HepG2 (cell line): ENCODE measurements at regions of chr17 and their contacts with region 1.

Region 1: DNA sequence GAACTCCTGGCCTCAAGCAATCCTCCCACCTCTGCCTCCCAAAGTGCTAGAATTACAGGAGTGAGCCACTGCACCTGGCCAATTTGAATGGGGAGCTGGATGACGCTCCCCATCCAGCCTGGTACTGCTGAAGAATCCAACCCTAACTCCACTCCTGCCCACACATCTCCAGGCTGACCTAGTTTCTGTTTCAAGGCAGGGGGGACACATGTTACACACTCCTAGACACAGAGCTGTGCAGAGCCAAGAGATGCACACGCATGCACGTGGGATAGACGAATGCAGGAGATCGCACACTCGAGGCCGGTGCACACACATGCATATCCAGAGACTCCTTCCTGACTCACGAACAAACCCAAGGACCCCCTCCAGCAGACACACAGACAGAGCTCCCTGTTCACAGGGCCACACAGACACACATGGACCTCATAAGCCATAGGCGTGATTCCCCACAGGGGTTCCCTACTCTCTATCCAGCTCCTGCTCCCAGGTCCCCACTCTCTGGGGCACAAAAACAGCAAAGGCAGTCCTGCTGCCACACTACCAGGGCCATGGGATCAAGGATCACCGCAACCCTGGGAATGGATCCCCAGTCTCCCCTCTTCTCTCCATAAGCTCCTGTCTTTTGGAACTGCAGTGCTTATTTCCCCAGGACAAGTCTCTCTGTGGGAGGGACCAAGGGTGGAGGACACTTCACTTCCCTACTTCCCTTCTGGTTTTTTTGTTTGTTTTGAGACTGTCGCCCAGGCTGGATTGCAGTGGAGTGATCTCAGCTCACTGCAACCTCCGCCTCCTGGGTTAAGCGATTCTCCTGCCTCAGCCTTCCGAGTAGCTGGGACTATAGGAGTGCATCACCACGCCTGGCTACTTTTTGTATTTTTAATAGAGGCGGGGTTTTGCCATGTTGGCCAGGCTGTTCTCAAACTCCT is 14.4 kb downstream of the EPOP start:
- DNase-seq: no peak
- ATAC-seq: no peak
- H3K4me3 ChIP-seq: no peak overlapping the region
- H3K27ac ChIP-seq: peak overlapping the region; percentile 75
- H3K4me1 ChIP-seq: peaks cover 85% of the 10 kb centered on the region
- H3K27me3 ChIP-seq: no peaks in the 10 kb centered on the region
- CTCF ChIP-seq: no peak
- EP300 ChIP-seq: no peak
- POLR2A ChIP-seq: no peak
- RAD21 ChIP-seq: 0 out of 2 replicates have a peak, but pooled peaks have one; percentile 19

Region 2: GRCh38 chr17:38605888-38606645 is 54.3 kb before region 1 on chr17 and contains the start of gene SRCIN1:
- CTCF ChIA-PET with region 1: interaction called, 73 read pairs
- POLR2A ChIA-PET with region 1: interaction called, 291 read pairs
- in situ Hi-C with region 1: loop called (anchors 5 kb)
- intact Hi-C with region 1: loop called (anchors 1 kb)
- DNase-seq: peak; percentile 57
- ATAC-seq: peak; percentile 42
- H3K4me3 ChIP-seq: peak within 1 kb of the TSS; percentile 76 to 84 (median 83)
- H3K27ac ChIP-seq: peak within 1 kb of the TSS; percentile 88
- H3K4me1 ChIP-seq: peaks cover 89% of the 10 kb centered on the region
- H3K27me3 ChIP-seq: no peaks in the 10 kb centered on the region
- CTCF ChIP-seq: peak; percentile 95
- EP300 ChIP-seq: 0 out of 4 replicates have a peak, but pooled peaks have one; percentile 28 to 30
- POLR2A ChIP-seq: peak; percentile 45 to 62; a peak in 3 of 4 replicates
- RAD21 ChIP-seq: peak; percentile 100
- total RNA-seq, gene SRCIN1: 0.90 and 1.2 TPM in 2 replicates

Region 3: DNA sequence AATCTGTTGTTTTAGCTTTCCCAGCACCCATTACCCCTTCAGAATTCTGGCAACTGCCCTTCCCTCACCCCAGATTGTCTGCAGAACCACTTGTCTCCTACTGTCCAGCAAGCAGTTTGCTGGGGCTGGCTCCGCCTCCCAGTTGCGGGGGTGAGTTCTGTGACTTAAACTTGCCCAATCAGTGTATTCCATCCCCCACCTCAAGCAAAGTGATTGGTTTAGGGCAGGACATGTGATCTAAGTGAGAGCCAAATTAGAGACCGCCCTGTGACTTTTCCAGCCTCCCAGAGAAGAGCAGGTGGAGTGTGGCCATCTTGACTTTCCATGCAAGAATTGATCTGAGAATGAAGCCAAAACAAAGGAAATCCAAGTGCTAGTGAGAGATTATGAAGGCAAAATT is 31.9 kb before region 1 on chr17:
- CTCF ChIA-PET with region 1: interaction called, 3 read pairs
- POLR2A ChIA-PET with region 1: interaction called, 14 read pairs
- in situ Hi-C with region 1: no loop called
- intact Hi-C with region 1: no loop called
- DNase-seq: peak; percentile 89
- ATAC-seq: peak; percentile 95
- H3K4me3 ChIP-seq: no peak overlapping the region
- H3K27ac ChIP-seq: peak overlapping the region; percentile 59
- H3K4me1 ChIP-seq: peaks cover 50% of the 10 kb centered on the region
- H3K27me3 ChIP-seq: no peaks in the 10 kb centered on the region
- CTCF ChIP-seq: no peak
- EP300 ChIP-seq: no peak
- POLR2A ChIP-seq: 0 out of 4 replicates have a peak, but pooled peaks of 1 of the 2 experiments have one; percentile 42
- RAD21 ChIP-seq: no peak

Region 4: GRCh38 chr17:38636054-38636453 is 24.3 kb before region 1 on chr17:
- CTCF ChIA-PET with region 1: interaction called, 3 read pairs
- POLR2A ChIA-PET with region 1: interaction called, 19 read pairs
- in situ Hi-C with region 1: no loop called
- intact Hi-C with region 1: no loop called
- DNase-seq: no peak
- ATAC-seq: peak; percentile 79
- H3K4me3 ChIP-seq: peak overlapping the region in 1 of 3 experiments; percentile 23; a peak in 1 of 6 replicates
- H3K27ac ChIP-seq: no peak overlapping the region
- H3K4me1 ChIP-seq: peaks cover 32% of the 10 kb centered on the region
- H3K27me3 ChIP-seq: no peaks in the 10 kb centered on the region
- CTCF ChIP-seq: no peak
- EP300 ChIP-seq: no peak
- POLR2A ChIP-seq: no peak
- RAD21 ChIP-seq: no peak